Activated T-helper 2 cell treated with anti-CD3 and anti-CD28 coated beads, Interferon-gamma antibody, Interleukin-2, Interleukin-4, amounts not matched to agents 10 μg/mL and 5 μg/mL and 100 μg/mL, durations not matched to agents 14 hours and 24 hours and 36 hours (primary cell): ENCODE measurements at regions of chr2 and their contacts with region 1.

Region 1: DNA sequence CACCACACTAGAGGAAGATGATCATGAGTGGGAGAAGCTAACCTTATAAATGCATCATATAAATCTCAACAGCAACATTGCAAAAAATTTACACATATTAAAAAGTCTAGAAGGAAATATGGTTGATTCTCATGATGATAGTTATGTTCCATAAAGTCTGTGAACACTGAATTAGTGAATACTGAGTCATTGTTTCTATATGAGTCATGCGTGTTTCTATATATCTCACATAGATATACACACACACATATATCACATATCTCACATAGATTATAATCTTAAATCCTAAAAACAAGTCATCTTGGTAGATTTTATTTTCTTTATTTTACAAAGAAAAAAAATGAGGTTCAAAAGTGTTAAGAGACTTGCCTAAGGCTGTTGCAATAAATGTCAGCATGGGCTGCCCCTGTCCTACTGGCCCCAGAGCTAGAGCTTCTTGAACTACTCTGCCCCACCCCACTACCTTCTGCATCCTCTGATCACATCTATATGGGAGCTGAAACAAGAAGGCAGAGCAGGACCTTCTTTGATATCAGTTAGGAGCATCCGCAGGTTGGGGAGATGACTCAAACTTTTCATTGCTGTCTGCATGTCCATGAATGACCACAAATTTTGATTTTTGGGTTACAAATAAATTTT is 81.8 kb upstream of the ADAM23 start:
- DNase-seq: peak; percentile 12
- H3K4me3 Mint-ChIP-seq: no peak overlapping the region
- H3K27ac Mint-ChIP-seq: peak overlapping the region; percentile 34
- H3K4me1 Mint-ChIP-seq: peaks cover 12% of the 10 kb centered on the region
- H3K27me3 Mint-ChIP-seq: peaks cover 6% of the 10 kb centered on the region

Region 2: DNA sequence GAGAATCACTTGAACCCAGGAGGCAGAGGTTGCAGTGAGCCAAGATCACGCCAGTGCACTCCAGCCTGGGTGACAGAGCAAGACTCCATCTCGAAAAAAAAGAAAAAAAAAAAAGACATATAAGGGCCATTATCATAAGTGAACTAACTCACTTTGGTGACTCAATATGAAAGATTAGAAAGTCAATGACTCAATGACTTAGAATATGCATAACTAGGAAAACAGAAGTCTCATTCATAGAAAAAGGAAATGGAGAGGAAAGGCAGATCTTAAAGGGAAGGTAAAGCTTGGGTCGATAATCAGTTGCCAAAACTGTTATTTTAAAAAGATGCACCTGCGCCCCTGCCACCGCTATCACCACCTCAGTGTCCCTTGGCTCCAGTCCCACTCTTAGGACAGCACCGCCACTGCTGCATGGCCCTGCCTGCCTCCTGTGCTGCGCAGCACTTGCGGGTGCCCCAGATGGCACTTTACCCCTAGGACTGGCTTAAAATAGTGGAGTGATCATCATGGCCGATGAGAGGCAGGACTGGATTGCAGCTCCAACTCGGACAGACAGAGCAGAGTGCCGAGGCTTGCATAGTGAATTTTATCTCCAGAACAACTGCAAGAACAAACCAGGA is 330.3 kb before region 1 on chr2:
- intact Hi-C with region 1: loop called (anchors 10 kb)
- DNase-seq: no peak
- H3K4me3 Mint-ChIP-seq: no peak overlapping the region
- H3K27ac Mint-ChIP-seq: peak overlapping the region; percentile 33
- H3K4me1 Mint-ChIP-seq: peaks cover 44% of the 10 kb centered on the region
- H3K27me3 Mint-ChIP-seq: no peaks in the 10 kb centered on the region

Region 3: GRCh38 chr2:206442833-206443734 is 81.6 kb after region 1 on chr2 and contains the start of gene ADAM23:
- intact Hi-C with region 1: loop called (anchors 5 kb)
- DNase-seq: peak; percentile 27
- H3K4me3 Mint-ChIP-seq: peak within 1 kb of the TSS; percentile 83
- H3K27ac Mint-ChIP-seq: no peak within 1 kb of the TSS
- H3K4me1 Mint-ChIP-seq: peaks cover 6% of the 10 kb centered on the region
- H3K27me3 Mint-ChIP-seq: peaks cover 74% of the 10 kb centered on the region
- total RNA-seq, gene ADAM23: 0.23 and 0.25 TPM in 2 replicates

Region 4: GRCh38 chr2:206531996-206532543 is 170.5 kb after region 1 on chr2:
- intact Hi-C with region 1: loop called (anchors 10 kb)
- DNase-seq: no peak
- H3K4me3 Mint-ChIP-seq: no peak overlapping the region
- H3K27ac Mint-ChIP-seq: no peak overlapping the region
- H3K4me1 Mint-ChIP-seq: peaks cover 17% of the 10 kb centered on the region
- H3K27me3 Mint-ChIP-seq: peaks cover 53% of the 10 kb centered on the region